Aorta (tissue), 5 donors: ENCODE measurements at regions of chr3 and their contacts with region 1.

Region 1: DNA sequence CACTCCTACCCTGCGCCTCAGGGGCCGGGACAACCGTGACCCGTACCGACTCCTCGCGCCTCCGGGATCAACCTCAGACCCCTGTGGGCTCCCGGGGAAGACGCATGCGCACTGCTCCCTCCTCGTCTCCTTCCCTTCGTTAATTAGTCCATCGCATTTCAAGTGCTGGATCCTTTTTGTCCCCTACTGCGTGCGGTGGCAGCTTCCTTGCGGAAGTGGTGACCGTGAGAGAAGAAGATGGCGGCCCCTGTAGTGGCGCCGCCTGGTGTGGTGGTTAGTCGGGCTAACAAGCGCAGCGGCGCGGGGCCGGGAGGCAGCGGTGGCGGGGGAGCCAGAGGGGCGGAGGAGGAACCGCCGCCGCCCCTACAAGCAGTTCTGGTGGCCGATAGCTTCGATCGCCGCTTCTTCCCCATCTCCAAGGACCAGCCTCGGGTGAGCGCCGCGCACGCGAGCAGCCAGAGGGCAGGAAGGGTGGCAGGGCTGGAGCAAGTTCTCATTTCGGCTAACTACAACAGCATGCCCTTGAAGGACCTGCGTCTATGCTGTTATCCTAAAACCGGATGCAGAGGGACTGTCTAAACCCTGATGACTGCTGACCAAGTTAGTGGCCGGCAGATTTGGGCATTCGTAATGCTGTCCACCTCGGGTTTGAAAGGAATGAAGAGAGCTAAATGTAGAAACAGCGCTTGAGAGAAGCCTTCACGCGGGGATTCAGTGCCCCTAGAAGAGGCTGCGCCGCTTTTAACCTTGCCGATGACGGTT is at the start of gene EIF2B5:
- DNase-seq: peak; percentile 94 to 97
- ATAC-seq: peak; percentile 97
- H3K4me3 ChIP-seq: peak within 1 kb of the TSS; percentile 30 to 75
- H3K27ac ChIP-seq: peak within 1 kb of the TSS; percentile 12 to 31
- H3K4me1 ChIP-seq: no peaks in the 10 kb centered on the region
- H3K27me3 ChIP-seq: no peaks in the 10 kb centered on the region
- total RNA-seq, gene EIF2B5: 32.2 to 32.9 TPM

Region 2: DNA sequence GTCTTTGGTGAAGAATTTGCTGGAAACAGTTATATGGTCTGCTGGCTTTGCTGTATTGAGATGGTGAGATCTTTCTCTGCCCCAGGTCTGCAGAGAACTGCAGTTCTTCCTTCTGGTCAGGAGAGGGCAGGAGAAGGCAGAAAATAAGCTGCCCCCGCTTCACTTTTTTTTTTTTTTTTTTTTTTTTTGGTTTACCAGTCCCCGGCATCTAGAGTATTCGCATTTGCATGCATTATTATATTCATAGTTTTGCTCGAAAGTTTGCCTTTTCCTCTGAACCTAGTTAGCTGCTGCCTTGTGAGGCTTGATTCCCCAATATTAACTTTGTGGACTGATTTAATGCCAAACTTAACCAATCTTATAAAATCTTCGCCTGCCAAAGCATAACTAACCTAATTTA is 240.0 kb before region 1 on chr3:
- intact Hi-C with region 1: loop called in 1 of 2 experiments (anchors 5 kb)
- DNase-seq: no peak
- ATAC-seq: peak; percentile 69
- H3K4me3 ChIP-seq: no peak overlapping the region
- H3K27ac ChIP-seq: no peak overlapping the region
- H3K4me1 ChIP-seq: no peaks in the 10 kb centered on the region
- H3K27me3 ChIP-seq: no peaks in the 10 kb centered on the region

Region 3: GRCh38 chr3:183988216-183988790 is 147.0 kb before region 1 on chr3:
- intact Hi-C with region 1: no loop called
- DNase-seq: no peak
- ATAC-seq: no peak
- H3K4me3 ChIP-seq: no peak overlapping the region
- H3K27ac ChIP-seq: no peak overlapping the region
- H3K4me1 ChIP-seq: no peaks in the 10 kb centered on the region
- H3K27me3 ChIP-seq: no peaks in the 10 kb centered on the region

Region 4: DNA sequence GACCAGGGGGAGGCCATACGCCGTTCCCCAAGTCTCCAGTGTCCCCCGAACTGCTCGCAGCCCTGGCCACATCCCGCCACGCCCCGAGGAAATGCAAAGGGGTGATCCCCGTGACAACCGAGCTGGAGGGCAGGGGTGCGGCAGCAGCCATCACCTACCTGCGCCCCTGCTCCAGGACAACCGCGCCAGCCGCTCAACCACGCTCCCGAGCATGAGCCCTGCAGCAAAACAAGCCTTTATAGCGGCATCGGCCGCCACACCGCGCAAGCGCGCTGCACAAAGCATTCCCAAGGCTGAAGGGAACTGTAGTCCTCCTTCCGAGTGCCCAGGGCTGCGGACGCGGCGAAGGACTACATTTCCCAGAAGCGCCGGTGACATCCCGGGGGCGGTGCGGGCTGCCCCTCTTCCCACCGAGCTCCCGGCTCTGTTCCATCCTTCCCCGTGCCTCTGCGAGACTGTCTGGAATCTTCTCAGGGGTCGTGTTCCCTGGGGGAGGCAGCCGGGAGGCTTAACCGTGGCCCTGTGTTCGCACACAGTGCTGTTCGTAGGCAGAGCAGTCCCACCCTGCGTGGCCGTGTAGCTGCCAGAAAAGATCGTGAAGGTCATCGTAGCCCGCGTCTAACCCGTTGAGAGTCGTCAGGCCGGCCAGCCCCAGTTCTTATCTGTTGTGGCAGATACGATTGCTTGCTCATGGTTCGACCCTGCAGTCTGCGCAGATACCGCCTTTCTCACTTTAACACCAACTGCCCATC is 117.5 kb before region 1 on chr3 and contains the start of gene ABCC5:
- intact Hi-C with region 1: loop called in 1 of 2 experiments (anchors 10 kb)
- DNase-seq: peak; percentile 95 to 96
- ATAC-seq: peak; percentile 99
- H3K4me3 ChIP-seq: peak within 1 kb of the TSS; percentile 52 to 85
- H3K27ac ChIP-seq: peak within 1 kb of the TSS in 1 of 2 donors; percentile 11
- H3K4me1 ChIP-seq: no peaks in the 10 kb centered on the region
- H3K27me3 ChIP-seq: no peaks in the 10 kb centered on the region
- total RNA-seq, gene ABCC5: 18.9 to 49.6 TPM

Region 5: GRCh38 chr3:184040010-184040409 is 95.3 kb before region 1 on chr3:
- intact Hi-C with region 1: loop called in 1 of 2 experiments (anchors 5 kb)
- DNase-seq: no peak
- ATAC-seq: no peak
- H3K4me3 ChIP-seq: no peak overlapping the region
- H3K27ac ChIP-seq: no peak overlapping the region
- H3K4me1 ChIP-seq: no peaks in the 10 kb centered on the region
- H3K27me3 ChIP-seq: no peaks in the 10 kb centered on the region

Region 6: GRCh38 chr3:184185461-184186308 is 50.4 kb after region 1 on chr3 and contains the start of gene ABCF3:
- intact Hi-C with region 1: loop called (anchors 2 to 5 kb)
- DNase-seq: peak; percentile 100
- ATAC-seq: peak; percentile 97
- H3K4me3 ChIP-seq: peak within 1 kb of the TSS; percentile 79 to 88
- H3K27ac ChIP-seq: peak within 1 kb of the TSS; percentile 50 to 77
- H3K4me1 ChIP-seq: no peaks in the 10 kb centered on the region
- H3K27me3 ChIP-seq: no peaks in the 10 kb centered on the region
- total RNA-seq, gene ABCF3: 44.1 to 57.1 TPM